ENCODE measurements at regions of chr16 and their contacts with region 1.

Region 1: GRCh38 chr16:3150346-3151218 is 15.8 kb downstream of the ZNF213 start:
- DNase-seq: peak; percentile 100
- H3K4me3 Mint-ChIP-seq: peak overlapping the region; percentile 88
- H3K27ac Mint-ChIP-seq: peak overlapping the region; percentile 89
- H3K4me1 Mint-ChIP-seq: peaks cover 27% of the 10 kb centered on the region
- H3K27me3 Mint-ChIP-seq: peaks cover 9% of the 10 kb centered on the region

Region 2: DNA sequence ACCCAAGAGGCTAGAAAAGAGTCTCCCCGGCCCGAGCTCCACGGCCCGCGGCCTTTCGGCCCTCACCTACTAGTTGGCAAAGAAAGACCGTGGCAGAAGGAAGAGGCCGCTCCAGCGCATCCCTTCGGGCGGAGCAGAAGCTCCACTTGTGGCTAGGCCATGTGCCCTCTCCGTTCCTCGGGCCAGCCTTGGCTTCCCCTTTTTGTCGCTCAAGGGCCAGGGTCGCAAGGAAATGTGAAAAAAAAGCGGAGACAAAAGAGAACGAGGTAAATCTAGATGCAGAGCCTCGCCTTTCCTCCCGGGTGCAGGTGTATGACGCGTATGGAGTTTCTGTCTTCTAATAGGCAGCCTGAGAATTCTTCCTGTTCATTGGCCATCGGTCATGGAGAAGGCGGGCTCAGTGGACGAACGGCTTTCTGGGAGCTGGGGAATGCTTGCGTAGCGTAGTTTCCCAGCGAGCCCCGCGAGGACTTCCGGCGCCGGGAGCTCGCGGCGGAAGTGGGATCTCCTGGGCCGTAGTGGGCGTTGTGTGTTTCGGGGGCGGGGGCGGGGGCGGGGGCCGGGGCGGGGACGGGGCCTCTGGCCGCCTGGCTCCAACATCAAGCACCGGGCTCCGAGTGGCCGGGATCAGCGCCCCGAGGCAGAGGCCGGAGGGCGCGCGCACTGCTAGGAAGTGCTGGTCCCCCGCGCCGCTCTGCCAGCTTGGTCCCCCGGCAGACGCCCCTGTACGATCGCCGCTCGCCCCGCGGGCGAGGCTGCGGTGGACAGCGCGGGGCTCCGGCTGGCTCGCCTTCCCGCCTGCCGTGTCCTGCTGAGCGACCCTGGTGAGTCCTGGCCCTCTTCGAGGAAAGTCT is 15.8 kb before region 1 on chr16 and contains the start of gene ZNF213:
- intact Hi-C with region 1: loop called (anchors 1 kb)
- DNase-seq: peak; percentile 98
- H3K4me3 Mint-ChIP-seq: peak within 1 kb of the TSS; percentile 99
- H3K27ac Mint-ChIP-seq: peak within 1 kb of the TSS; percentile 97
- H3K4me1 Mint-ChIP-seq: peaks cover 26% of the 10 kb centered on the region
- H3K27me3 Mint-ChIP-seq: no peaks in the 10 kb centered on the region
- total RNA-seq, gene ZNF213: 9.5 and 10.6 TPM in 2 replicates

Region 3: GRCh38 chr16:3187798-3188674 is 37.5 kb after region 1 on chr16 and contains the start of gene OR1F1:
- intact Hi-C with region 1: loop called (anchors 1 kb)
- DNase-seq: peak; percentile 87
- H3K4me3 Mint-ChIP-seq: peak within 1 kb of the TSS; percentile 70
- H3K27ac Mint-ChIP-seq: peak within 1 kb of the TSS; percentile 79
- H3K4me1 Mint-ChIP-seq: peaks cover 38% of the 10 kb centered on the region
- H3K27me3 Mint-ChIP-seq: peaks cover 58% of the 10 kb centered on the region
- total RNA-seq, gene OR1F1: not detected in 2 replicates

Region 4: GRCh38 chr16:3305109-3306068 is 154.8 kb after region 1 on chr16 and contains the starts of genes TIGD7 and ZNF75A:
- intact Hi-C with region 1: loop called (anchors 5 kb)
- DNase-seq: peak; percentile 94
- H3K4me3 Mint-ChIP-seq: peak within 1 kb of the TSS; percentile 80
- H3K27ac Mint-ChIP-seq: peak within 1 kb of the TSS; percentile 79
- H3K4me1 Mint-ChIP-seq: peaks cover 7% of the 10 kb centered on the region
- H3K27me3 Mint-ChIP-seq: no peaks in the 10 kb centered on the region
- total RNA-seq, gene TIGD7: 2.3 and 3.2 TPM in 2 replicates
- total RNA-seq, gene ZNF75A: 26.5 and 33.5 TPM in 2 replicates

Measured in activated CD4-positive, alpha-beta T cell treated with anti-CD3 and anti-CD28 coated beads, Interleukin-2, amount 10 ng/mL, durations not matched to agents 24 days and 14 days (primary cell).